ENCODE measurements at regions of chr1 and their contacts with region 1.

Region 1: GRCh38 chr1:88998716-88999115 is 6.3 kb upstream of the KYAT3 start:
- DNase-seq: peak; percentile 59
- H3K4me3 ChIP-seq: no peak overlapping the region
- H3K27ac ChIP-seq: no peak overlapping the region
- H3K4me1 ChIP-seq: no peaks in the 10 kb centered on the region
- H3K27me3 ChIP-seq: no peaks in the 10 kb centered on the region
- CTCF ChIP-seq: peak; percentile 34 to 83 (median 76)
- POLR2A ChIP-seq: no peak

Region 2: DNA sequence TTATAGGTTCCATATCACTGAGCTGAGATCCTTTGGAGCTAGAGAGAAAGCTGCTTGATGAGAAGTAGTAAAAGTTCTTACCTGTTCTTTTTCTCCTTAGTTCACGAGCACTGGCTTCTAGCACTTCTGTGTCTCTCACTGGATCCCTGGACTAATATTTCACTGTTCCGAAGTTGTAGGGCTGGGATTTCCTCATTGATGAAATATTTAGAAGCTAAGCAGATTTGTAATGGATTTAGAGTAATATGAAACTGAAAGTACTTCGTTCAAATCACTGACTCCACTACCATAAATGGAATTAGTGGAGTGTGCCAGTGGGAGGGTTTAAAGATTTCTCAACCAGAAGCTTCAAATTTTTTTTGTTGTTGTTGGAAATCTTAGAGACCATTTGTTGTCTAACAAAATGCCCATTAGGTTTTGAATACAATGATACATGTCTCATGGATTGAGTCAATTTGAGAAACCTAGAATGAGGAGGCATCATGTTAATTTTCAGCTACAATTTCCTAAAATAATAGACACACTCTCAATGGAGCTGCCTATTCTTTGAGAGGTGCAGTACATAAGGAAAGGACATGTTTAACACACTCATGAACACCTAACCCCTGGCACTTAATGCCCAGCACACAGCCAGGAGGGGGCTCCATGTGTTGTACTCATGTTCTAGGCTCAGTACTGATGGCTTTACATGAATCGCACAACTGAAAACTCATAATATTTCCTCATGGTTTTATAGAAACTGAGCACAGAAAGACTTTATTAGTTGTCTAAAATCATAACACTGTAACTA is 66.6 kb after region 1 on chr1 and contains the start of gene GBP1:
- intact Hi-C with region 1: no loop called
- DNase-seq: peak; percentile 38
- H3K4me3 ChIP-seq: peak within 1 kb of the TSS; percentile 23 to 34
- H3K27ac ChIP-seq: peak within 1 kb of the TSS; percentile 84 to 86
- H3K4me1 ChIP-seq: no peaks in the 10 kb centered on the region
- H3K27me3 ChIP-seq: no peaks in the 10 kb centered on the region
- CTCF ChIP-seq: no peak
- POLR2A ChIP-seq: peak; percentile 26
- total RNA-seq, gene GBP1: 9.1 to 13.9 TPM

Region 3: DNA sequence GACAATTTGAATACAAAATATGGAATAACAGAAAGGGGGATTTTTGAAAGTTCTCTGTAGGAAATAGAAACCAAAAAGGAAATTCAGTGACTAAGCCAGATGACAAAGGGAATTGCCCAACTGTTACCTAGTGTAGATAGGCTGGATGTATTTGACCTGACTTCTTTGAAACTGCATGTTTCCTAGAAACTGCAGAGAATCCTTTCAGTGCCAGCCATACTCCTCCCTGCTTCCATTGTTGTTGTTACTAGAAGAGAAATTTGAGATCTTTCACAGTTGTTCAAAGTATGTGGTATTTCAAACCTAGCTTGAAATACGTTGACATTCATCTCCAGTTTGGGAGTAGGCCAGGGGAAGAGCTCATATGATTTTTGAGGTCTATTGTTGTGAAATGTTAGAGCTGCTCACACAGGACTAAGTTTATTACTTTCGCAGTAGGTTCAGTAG is 275.7 kb after region 1 on chr1:
- intact Hi-C with region 1: loop called (anchors 10 kb)
- DNase-seq: peak; percentile 33
- H3K4me3 ChIP-seq: no peak overlapping the region
- H3K27ac ChIP-seq: no peak overlapping the region
- H3K4me1 ChIP-seq: no peaks in the 10 kb centered on the region
- H3K27me3 ChIP-seq: no peaks in the 10 kb centered on the region
- CTCF ChIP-seq: no peak
- POLR2A ChIP-seq: no peak

Region 4: DNA sequence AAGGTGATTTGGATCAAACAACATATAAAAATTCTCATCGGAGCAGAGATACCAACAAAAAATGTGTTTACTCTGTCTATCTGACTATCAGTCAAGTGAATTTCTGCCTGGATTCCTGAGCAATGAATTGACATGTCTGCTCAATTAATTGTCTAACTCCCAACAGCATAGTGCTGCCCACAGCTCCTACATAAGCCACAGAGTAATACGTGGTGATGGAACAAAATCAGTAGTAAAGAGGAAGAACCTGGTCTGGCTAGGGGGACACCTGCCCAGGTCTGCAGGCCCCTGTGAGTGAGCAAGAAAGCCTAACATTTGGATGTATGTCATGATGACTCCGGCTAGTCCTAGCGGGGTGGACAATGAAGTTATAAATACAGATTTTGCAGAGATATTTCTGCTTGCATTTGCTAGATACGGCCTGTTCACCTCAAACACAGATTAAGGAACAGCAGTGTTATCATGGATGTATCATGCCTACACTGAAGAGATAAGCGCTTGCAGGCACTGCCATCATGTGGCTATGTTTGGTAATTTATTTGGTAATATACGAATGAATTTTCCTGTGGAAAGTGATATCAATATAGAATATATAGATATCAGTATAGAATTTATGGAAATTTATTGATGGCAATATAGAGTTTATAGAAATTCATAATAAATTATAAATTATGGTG is 456.3 kb after region 1 on chr1:
- intact Hi-C with region 1: loop called (anchors 5 kb)
- DNase-seq: peak; percentile 36
- H3K4me3 ChIP-seq: no peak overlapping the region
- H3K27ac ChIP-seq: no peak overlapping the region
- H3K4me1 ChIP-seq: no peaks in the 10 kb centered on the region
- H3K27me3 ChIP-seq: no peaks in the 10 kb centered on the region
- CTCF ChIP-seq: peak; percentile 41 to 80 (median 63)
- POLR2A ChIP-seq: no peak

Measured in prostate gland (tissue), 2 donors.